Left cardiac atrium (tissue), 4 donors: ENCODE measurements at regions of chr6 and their contacts with region 1.

Region 1: DNA sequence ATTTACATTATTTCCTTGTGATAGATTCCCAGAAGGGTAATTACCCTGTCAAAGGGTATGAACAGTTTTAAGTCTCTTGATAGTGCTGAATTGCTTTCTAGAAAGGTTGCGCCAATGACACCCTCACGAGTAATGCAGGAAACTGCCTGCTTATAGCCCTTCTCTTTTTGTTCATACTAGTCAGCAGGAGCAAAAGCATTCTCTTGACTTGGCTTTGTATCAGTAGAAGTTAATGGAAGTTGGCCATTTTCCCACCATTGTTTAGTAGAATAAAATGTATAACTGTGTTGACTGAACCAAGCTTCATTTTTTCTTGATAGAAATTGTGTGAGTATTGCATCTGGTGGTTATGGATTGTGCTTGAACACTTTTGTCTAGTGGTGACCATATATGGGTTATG is 100.1 kb downstream of the FARS2 start:
- DNase-seq: no peak
- ATAC-seq: no peak

Region 2: GRCh38 chr6:5305968-5306626 is 55.3 kb before region 1 on chr6:
- intact Hi-C with region 1: loop called in 1 of 2 experiments (anchors 5 kb)
- DNase-seq: no peak
- ATAC-seq: no peak

Region 3: GRCh38 chr6:5389086-5389745 is 27.8 kb after region 1 on chr6:
- intact Hi-C with region 1: no loop called
- DNase-seq: no peak
- ATAC-seq: no peak

Region 4: DNA sequence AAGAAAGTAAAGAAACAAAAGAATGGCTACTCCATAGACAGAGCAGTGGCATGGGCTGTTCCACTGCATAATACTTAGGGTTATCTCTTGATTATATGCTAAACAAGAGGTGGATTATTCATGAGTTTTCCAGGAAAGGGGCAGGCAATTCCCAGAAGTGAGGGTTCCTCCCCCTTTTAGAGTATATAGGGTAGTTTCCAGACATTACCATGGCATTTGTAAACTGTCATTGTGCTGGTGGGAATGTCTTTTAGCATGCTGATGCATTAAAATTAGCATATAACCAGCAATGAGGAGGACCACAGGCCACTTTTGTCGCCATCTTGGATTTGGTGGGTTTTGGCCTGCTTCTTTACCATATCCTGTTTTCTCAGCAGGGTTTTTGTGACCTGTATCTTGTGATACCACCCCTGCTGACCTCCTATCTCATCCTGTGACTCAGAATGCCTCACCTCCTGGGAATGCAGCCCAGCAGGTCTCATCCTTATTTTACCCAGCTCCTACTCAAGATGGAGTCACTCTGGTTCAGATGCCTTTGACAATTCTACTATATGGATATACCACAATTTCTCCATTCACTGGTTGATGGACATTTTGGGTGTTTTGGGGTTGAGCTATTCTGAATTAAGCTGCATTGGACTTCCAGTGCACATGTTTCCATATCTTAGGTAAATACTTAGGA is 180.5 kb after region 1 on chr6:
- intact Hi-C with region 1: no loop called
- DNase-seq: no peak
- ATAC-seq: no peak

Region 5: GRCh38 chr6:5619249-5619648 is 257.9 kb after region 1 on chr6:
- intact Hi-C with region 1: no loop called
- DNase-seq: no peak
- ATAC-seq: no peak